Activated CD4-positive, alpha-beta T cell treated with anti-CD3 and anti-CD28 coated beads for 36 hours (primary cell): ENCODE measurements at regions of chr15 and their contacts with region 1.

Region 1: DNA sequence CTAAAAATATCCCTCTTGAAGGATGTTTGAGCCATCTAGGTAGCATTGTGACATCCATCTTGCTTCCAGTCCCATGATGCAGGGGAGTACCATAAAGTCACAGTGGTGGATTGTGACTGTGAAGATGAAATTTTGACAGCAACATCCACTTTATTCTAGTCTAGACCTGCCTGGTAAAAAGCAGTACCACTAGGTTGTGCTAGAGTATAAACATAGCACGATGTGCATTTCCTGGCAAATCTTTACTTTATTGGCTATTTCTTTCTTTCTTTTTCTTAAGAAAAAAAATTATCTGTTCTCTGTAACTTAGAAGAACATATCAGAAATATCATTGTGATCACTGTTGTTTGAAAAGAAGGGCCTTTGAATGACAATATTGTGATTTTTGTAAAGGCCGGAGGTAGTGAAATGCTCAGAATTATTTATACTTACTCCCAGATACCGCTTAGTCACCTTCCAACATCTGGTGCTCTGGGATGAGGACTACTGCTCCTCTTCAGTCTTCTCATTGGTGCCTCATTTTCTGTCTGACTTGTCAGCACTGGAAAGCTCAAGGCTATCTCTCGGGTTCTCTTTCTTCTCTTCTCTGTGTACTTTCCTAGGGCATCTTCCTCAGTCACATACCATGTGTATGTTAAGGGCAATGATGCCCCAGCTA is 35.6 kb downstream of the AGBL1 start:
- DNase-seq: no peak
- ATAC-seq: no peak
- H3K4me3 Mint-ChIP-seq: no peak overlapping the region
- H3K27ac Mint-ChIP-seq: no peak overlapping the region
- H3K4me1 Mint-ChIP-seq: no peaks in the 10 kb centered on the region
- H3K27me3 Mint-ChIP-seq: no peaks in the 10 kb centered on the region

Region 2: DNA sequence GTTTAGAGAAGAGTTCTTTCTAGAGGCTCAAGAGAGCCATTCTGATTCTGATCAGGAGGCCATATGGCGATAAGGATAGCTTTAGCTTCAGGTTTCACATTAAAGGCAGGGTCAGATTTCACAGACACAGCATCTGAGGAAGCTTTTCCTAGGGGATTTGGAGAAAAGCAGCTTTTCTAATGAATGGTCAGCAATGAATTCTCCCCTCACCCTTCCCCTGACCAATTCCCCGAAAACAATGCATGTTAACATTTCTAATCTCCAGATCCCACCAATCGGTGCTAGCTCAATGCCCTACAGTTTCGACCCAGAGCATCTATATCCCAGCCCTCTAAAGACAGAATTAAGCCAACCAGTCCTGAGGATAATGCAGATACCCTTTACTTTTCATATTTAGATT is 25.9 kb before region 1 on chr15:
- CTCF ChIA-PET with region 1: no interaction called
- POLR2A ChIA-PET with region 1: no interaction called
- intact Hi-C with region 1: loop called in 1 of 2 experiments (anchors 2 kb)
- DNase-seq: no peak
- ATAC-seq: no peak
- H3K4me3 Mint-ChIP-seq: no peak overlapping the region
- H3K27ac Mint-ChIP-seq: no peak overlapping the region
- H3K4me1 Mint-ChIP-seq: no peaks in the 10 kb centered on the region
- H3K27me3 Mint-ChIP-seq: peaks cover 2% of the 10 kb centered on the region

Region 3: DNA sequence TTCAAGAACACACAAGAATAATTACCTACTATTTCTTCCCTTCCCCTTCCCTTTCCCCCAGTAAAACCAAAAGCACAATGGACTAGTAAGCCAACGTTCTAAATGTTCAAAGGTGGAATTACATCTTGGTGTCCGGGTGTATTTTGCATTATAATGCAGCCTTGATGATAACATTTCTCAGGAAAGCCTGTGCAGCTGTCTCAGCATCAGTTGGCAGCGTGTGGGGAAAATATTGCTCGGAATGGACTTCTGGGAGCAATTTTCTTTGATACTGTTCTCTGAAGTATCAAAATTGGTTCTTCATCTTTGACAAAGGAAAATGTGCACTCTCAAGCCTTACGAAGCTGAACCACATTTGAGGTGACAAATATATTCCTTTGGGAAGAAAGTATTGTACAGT is 163.3 kb after region 1 on chr15:
- CTCF ChIA-PET with region 1: no interaction called
- POLR2A ChIA-PET with region 1: no interaction called
- intact Hi-C with region 1: no loop called
- DNase-seq: no peak
- ATAC-seq: no peak
- H3K4me3 Mint-ChIP-seq: no peak overlapping the region
- H3K27ac Mint-ChIP-seq: no peak overlapping the region
- H3K4me1 Mint-ChIP-seq: no peaks in the 10 kb centered on the region
- H3K27me3 Mint-ChIP-seq: peaks cover 3% of the 10 kb centered on the region